ENCODE measurements at regions of chr3 and their contacts with region 1.

Region 1: DNA sequence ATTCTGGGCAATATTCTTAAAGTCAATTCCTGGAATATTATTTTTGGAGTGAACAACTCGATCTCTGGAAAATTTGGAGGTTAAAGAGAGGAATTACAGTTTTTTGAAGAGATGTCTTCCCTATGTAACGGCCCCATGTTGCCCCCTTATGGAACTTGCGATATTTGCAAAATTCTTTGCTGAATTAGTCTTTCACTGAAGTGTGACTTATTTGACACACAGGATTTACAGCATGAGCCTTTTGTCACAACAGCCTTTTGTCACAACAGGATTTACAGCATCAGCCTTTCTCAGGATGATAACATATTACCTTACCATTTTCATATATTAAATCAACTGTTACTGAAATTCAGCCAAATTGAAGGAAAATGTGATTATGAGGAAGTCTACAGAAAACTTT is 37.8 kb upstream of the SPTSSB start:
- DNase-seq: peak in 2 of 5 donors; percentile 23 to 25
- ATAC-seq: peak in 2 of 4 donors; percentile 45 to 47
- H3K4me3 ChIP-seq: no peak overlapping the region
- H3K27ac ChIP-seq: no peak overlapping the region
- H3K4me1 ChIP-seq: peaks cover 0 to 22% (median 13%) of the 10 kb centered on the region in 12 donors
- H3K27me3 ChIP-seq: no peaks in the 10 kb centered on the region
- CTCF ChIP-seq: peak in 11 of 12 donors; percentile 26 to 65 (median 52)
- POLR2A ChIP-seq: no peak

Region 2: DNA sequence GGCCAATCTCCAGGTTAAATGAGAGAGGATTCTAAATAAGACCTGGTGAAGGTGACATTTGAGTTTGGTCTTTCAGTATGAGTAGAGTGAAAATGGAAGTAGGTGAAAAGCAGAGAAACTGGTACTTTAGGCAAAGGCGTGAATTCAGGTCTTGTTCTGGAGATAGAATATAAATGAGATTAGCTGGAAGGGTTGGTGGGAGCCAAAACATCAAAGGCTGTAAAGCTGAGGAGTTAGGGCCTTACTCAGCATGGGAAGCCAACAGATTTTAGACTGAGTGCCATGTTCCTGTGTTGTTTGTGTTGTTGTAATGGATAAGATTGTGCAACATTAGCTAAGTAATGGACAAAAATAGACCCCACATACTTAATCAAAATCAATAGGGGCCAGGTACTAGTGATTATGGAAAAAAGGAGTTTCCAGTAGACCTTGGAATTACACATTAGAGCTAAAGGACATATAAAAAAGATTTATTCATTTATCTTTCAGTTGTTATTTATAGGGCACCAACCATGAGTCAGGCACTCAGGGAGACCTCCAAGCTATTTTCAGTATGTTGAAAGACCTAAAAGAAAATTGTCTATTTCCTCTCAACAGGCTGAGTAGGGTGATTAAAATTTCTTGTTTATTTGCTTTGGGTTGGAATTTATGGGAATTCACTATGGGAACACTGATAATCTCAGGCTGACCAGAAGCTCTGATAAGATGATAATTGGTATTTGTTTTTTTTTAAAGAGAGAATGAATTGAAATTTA is 711.3 kb before region 1 on chr3:
- intact Hi-C with region 1: loop called in 1 of 10 experiments (anchors 10 kb)
- DNase-seq: no peak
- ATAC-seq: peak; percentile 34 to 67 (median 55)
- H3K4me3 ChIP-seq: no peak overlapping the region
- H3K27ac ChIP-seq: peak overlapping the region in 3 of 12 donors; percentile 26 to 40 (median 28)
- H3K4me1 ChIP-seq: peaks cover 0 to 17% (median 8%) of the 10 kb centered on the region in 12 donors
- H3K27me3 ChIP-seq: no peaks in the 10 kb centered on the region
- CTCF ChIP-seq: no peak
- POLR2A ChIP-seq: no peak

Region 3: DNA sequence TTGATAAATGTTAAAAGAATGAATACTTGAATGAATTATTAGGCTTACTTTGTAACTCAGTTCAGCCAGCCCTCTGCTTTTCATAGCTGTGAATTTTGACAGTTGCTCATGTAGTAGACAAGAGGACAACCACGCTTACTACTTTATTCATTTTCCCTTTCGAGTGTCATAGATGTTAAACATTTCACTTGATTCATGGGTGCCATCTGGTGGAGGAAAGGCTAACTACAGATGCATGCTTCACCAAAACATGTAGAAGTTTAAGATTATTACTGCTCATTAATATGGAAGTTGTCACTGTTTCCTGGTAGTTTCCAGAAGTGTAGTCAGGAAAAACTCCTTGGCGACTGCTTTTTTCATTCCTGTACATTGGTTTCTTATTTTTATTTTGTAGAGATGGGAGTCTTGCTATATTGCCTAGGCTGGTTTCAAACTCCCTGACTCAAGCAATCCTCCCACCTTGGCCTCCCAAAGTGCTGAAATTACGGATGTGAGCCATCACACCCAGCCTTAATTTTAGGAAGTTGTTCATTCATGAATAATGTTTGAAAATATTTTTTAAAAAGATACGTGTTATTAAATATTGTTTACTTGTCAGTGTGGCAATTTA is 467.1 kb before region 1 on chr3:
- intact Hi-C with region 1: loop called in 1 of 10 experiments (anchors 10 kb)
- DNase-seq: peak in 3 of 5 donors; percentile 60 to 67 (median 61)
- ATAC-seq: peak; percentile 55 to 84 (median 75)
- H3K4me3 ChIP-seq: no peak overlapping the region
- H3K27ac ChIP-seq: no peak overlapping the region
- H3K4me1 ChIP-seq: peaks cover 0 to 8% (median 0%) of the 10 kb centered on the region in 12 donors
- H3K27me3 ChIP-seq: no peaks in the 10 kb centered on the region
- CTCF ChIP-seq: peak; percentile 80 to 97 (median 88)
- POLR2A ChIP-seq: no peak

Region 4: GRCh38 chr3:161069511-161070263 is 339.4 kb before region 1 on chr3:
- intact Hi-C with region 1: loop called in 1 of 10 experiments (anchors 10 kb)
- DNase-seq: no peak
- ATAC-seq: peak in 3 of 4 donors; percentile 35 to 72 (median 59)
- H3K4me3 ChIP-seq: no peak overlapping the region
- H3K27ac ChIP-seq: peak overlapping the region in 3 of 12 donors; percentile 14 to 74 (median 14)
- H3K4me1 ChIP-seq: peaks cover 0 to 33% (median 10%) of the 10 kb centered on the region in 12 donors
- H3K27me3 ChIP-seq: no peaks in the 10 kb centered on the region
- CTCF ChIP-seq: no peak
- POLR2A ChIP-seq: no peak

Region 5: DNA sequence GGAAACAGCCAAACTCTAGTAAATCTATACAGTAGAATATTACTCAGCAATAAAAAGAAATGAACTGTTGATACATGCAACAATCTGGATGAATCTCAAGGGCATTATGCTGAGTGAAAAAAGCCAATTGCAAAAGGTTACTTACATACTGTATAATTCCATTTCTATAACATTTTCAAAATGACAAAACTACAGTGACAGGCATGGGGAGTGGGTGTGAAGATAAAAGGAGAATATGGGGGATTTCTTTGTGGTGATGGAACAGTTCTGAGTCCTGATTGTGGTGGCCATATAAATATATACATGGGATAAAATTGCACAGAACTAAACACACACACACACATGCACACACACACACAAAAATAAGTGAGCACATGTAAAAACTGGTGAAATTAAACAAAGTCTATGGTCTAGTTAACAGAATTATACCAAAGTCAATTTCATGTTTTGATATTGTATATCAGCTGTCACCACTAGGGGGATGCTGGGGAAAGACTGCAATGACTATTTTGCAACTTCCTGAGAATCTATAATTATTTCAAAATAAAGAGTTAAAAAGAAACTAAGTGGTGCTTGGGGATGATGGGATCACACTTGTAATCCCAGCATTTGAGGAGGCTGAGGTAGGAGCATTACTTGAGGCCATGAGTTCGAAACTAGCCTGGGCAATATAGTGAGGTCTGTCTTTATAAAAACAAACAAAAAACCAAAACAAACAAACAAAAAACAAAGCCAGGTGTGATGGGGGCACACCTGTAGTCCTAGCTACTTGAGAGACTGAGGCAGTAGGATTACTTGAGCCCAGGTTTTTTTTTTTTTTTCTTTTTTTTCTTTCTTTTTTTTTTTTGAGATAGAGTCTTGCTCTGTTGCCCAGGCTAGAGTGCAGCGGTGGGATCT is 103.7 kb before region 1 on chr3:
- intact Hi-C with region 1: loop called in 2 of 10 experiments (anchors 10 kb)
- DNase-seq: no peak
- ATAC-seq: no peak
- H3K4me3 ChIP-seq: no peak overlapping the region
- H3K27ac ChIP-seq: no peak overlapping the region
- H3K4me1 ChIP-seq: no peaks in the 10 kb centered on the region
- H3K27me3 ChIP-seq: no peaks in the 10 kb centered on the region
- CTCF ChIP-seq: peak; percentile 26 to 67 (median 56)
- POLR2A ChIP-seq: no peak